Activated CD4-positive, alpha-beta T cell treated with anti-CD3 and anti-CD28 coated beads, Interleukin-2, amount 10 ng/mL, durations not matched to agents 24 days and 14 days (primary cell): ENCODE measurements at regions of chr2 and their contacts with region 1.

Region 1: GRCh38 chr2:37231241-37232130 is at the starts of genes CEBPZ and NDUFAF7:
- DNase-seq: peak; percentile 96
- H3K4me3 Mint-ChIP-seq: no peak within 1 kb of the TSS
- H3K27ac Mint-ChIP-seq: no peak within 1 kb of the TSS
- H3K4me1 Mint-ChIP-seq: peaks cover 16% of the 10 kb centered on the region
- H3K27me3 Mint-ChIP-seq: no peaks in the 10 kb centered on the region
- total RNA-seq, gene CEBPZ: 63.2 and 68.2 TPM in 2 replicates
- total RNA-seq, gene NDUFAF7: 24.3 and 28.9 TPM in 2 replicates

Region 2: GRCh38 chr2:36966370-36967235 is 264.9 kb before region 1 on chr2 and contains the start of gene STRN:
- intact Hi-C with region 1: loop called (anchors 5 kb)
- DNase-seq: peak; percentile 100
- H3K4me3 Mint-ChIP-seq: peak within 1 kb of the TSS; percentile 95
- H3K27ac Mint-ChIP-seq: peak within 1 kb of the TSS; percentile 92
- H3K4me1 Mint-ChIP-seq: peaks cover 46% of the 10 kb centered on the region
- H3K27me3 Mint-ChIP-seq: peaks cover 2% of the 10 kb centered on the region
- total RNA-seq, gene STRN: 27.0 and 28.0 TPM in 2 replicates

Region 3: GRCh38 chr2:37156857-37157714 is 74.4 kb before region 1 on chr2 and contains the start of gene EIF2AK2:
- intact Hi-C with region 1: loop called (anchors 1 kb)
- DNase-seq: peak; percentile 96
- H3K4me3 Mint-ChIP-seq: peak within 1 kb of the TSS; percentile 92
- H3K27ac Mint-ChIP-seq: peak within 1 kb of the TSS; percentile 92
- H3K4me1 Mint-ChIP-seq: peaks cover 40% of the 10 kb centered on the region
- H3K27me3 Mint-ChIP-seq: peaks cover 2% of the 10 kb centered on the region
- total RNA-seq, gene EIF2AK2: 44.5 and 46.7 TPM in 2 replicates

Region 4: GRCh38 chr2:37168217-37168981 is 63.1 kb before region 1 on chr2:
- intact Hi-C with region 1: no loop called
- DNase-seq: peak; percentile 75
- H3K4me3 Mint-ChIP-seq: no peak overlapping the region
- H3K27ac Mint-ChIP-seq: no peak overlapping the region
- H3K4me1 Mint-ChIP-seq: no peaks in the 10 kb centered on the region
- H3K27me3 Mint-ChIP-seq: peaks cover 3% of the 10 kb centered on the region

Region 5: DNA sequence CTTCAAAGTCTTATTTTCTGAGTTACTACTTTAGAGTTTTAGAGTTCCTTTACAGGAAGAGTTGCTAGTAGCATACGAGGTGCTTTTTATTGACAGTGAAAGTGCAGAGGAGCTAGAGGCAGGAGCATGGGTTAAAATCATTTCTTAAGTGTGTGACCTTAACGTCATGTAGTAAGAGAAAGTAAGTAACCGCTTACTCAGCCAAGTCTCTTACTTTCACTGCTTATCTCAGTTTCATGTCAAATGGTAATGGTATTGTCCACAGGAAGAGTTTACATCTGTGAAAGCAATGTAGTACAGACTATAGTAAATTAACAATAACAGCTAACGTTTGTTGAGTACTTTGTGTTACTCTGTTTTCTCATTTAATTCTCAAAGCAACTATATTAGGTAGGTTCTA is 12.5 kb after region 1 on chr2:
- intact Hi-C with region 1: loop called (anchors 1 kb)
- DNase-seq: peak; percentile 60
- H3K4me3 Mint-ChIP-seq: peak overlapping the region; percentile 31
- H3K27ac Mint-ChIP-seq: peak overlapping the region; percentile 74
- H3K4me1 Mint-ChIP-seq: peaks cover 9% of the 10 kb centered on the region
- H3K27me3 Mint-ChIP-seq: no peaks in the 10 kb centered on the region

Region 6: DNA sequence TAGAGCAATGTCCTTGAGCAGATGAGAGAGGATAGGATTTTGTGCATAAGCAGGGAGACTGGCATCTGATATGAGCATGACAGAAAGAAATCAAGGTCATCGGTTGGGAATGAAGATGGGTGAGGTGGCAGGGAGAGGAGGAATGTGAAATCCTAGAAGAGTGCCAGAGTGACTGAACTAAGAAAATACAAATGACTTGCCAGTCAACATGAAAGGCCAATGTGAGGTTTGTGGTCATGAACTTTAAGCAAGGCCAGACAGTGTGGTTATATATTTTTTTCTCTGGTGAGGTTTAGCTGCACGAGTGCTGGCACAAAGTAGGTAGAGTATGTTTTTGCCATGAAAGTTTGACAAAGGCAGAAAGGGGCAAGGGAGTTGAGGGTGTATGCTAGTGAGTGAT is 134.2 kb after region 1 on chr2:
- intact Hi-C with region 1: loop called (anchors 1 kb)
- DNase-seq: peak; percentile 61
- H3K4me3 Mint-ChIP-seq: no peak overlapping the region
- H3K27ac Mint-ChIP-seq: no peak overlapping the region
- H3K4me1 Mint-ChIP-seq: peaks cover 13% of the 10 kb centered on the region
- H3K27me3 Mint-ChIP-seq: peaks cover 33% of the 10 kb centered on the region

Region 7: GRCh38 chr2:37389989-37390765 is 158.7 kb after region 1 on chr2:
- intact Hi-C with region 1: loop called (anchors 1 kb)
- DNase-seq: peak; percentile 91
- H3K4me3 Mint-ChIP-seq: peak overlapping the region; percentile 53
- H3K27ac Mint-ChIP-seq: peak overlapping the region; percentile 92
- H3K4me1 Mint-ChIP-seq: peaks cover 19% of the 10 kb centered on the region
- H3K27me3 Mint-ChIP-seq: peaks cover 8% of the 10 kb centered on the region